ENCODE measurements at regions of chr3 and their contacts with region 1.

Region 1: GRCh38 chr3:31704591-31705179 is 172.0 kb downstream of the STT3B start:
- DNase-seq: peak; percentile 50
- H3K4me3 ChIP-seq: no peak overlapping the region
- H3K27ac ChIP-seq: no peak overlapping the region
- H3K4me1 ChIP-seq: peaks cover 9% of the 10 kb centered on the region
- H3K27me3 ChIP-seq: no peaks in the 10 kb centered on the region
- CTCF ChIP-seq: peak in 1 of 2 donors; percentile 10

Region 2: DNA sequence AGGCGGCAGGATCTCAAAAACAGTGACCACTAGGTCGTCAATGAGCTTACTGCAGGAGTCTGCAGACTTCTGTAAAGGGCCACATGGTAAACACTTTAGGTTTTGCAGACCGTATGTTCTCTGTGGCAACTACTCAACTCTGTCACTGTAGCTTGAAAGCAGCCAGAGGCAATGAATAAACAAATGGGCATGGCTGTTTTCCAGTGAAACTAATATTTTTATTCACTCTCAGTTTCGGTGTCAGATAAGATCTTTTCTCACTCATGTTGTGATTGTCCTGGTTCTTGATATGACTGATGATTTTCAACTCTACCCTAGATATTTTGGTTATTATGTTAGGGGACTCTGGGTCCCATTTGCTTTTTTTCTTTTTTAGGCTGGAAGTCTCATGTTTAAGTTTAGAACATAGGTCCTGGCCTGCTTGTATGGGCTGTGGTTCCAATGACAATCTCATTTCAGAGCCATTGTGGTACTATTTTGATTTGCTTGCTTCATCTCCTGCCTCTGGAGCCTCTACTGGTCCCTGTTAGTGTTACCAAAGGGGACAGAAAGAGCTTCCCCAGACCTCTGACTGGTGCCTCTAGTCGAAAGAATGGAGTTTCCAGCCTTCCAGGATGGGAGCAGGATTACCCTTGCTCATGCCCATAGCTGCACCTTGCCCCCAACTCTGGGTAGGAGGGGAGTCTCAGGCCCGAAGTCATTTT is 50.0 kb after region 1 on chr3:
- CTCF ChIA-PET with region 1: no interaction called
- dilution Hi-C with region 1: loop called (anchors 5 kb)
- in situ Hi-C with region 1: no loop called
- intact Hi-C with region 1: no loop called
- DNase-seq: no peak
- H3K4me3 ChIP-seq: no peak overlapping the region
- H3K27ac ChIP-seq: no peak overlapping the region
- H3K4me1 ChIP-seq: no peaks in the 10 kb centered on the region
- H3K27me3 ChIP-seq: no peaks in the 10 kb centered on the region
- CTCF ChIP-seq: no peak

Region 3: DNA sequence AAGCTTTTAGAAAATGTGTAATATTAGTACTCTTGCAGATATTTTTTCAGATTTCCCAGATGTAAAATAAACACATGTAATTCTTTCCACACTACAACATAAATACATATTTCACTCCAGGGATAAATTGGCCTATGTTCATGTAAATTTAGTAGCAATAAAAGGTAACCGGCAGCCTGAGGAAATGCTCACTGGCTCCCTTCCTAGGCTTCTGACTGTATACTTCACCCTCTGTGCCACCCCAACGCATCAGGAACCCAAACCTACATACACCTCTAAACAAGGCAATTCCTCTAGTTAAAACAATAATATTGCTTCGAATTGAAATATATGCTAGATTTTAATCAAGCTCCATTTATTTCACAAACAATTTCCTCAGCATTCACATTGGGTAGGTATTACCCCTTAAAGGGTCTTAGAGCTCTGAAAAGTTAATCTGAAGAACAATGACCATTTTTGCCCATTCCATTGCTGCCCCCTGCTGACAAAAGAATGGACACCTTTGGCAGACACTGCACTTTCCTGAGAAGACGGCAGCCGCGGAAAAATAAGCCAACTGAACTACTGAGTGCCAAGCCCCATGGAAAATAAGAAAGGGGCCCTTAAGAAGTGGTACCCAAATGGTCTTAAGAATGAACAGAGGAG is 63.9 kb after region 1 on chr3:
- CTCF ChIA-PET with region 1: no interaction called
- dilution Hi-C with region 1: no loop called
- in situ Hi-C with region 1: no loop called
- intact Hi-C with region 1: no loop called
- DNase-seq: no peak
- H3K4me3 ChIP-seq: no peak overlapping the region
- H3K27ac ChIP-seq: no peak overlapping the region
- H3K4me1 ChIP-seq: no peaks in the 10 kb centered on the region
- H3K27me3 ChIP-seq: no peaks in the 10 kb centered on the region
- CTCF ChIP-seq: peak; percentile 31 to 54